AG04449 (cell line): ENCODE measurements at regions of chr19 and their contacts with region 1.

Region 1: GRCh38 chr19:13784731-13785452 is 10.4 kb upstream of the ZSWIM4 start:
- DNase-seq: no peak
- H3K4me3 ChIP-seq: no peak overlapping the region
- CTCF ChIP-seq: peak; percentile 78

Region 2: DNA sequence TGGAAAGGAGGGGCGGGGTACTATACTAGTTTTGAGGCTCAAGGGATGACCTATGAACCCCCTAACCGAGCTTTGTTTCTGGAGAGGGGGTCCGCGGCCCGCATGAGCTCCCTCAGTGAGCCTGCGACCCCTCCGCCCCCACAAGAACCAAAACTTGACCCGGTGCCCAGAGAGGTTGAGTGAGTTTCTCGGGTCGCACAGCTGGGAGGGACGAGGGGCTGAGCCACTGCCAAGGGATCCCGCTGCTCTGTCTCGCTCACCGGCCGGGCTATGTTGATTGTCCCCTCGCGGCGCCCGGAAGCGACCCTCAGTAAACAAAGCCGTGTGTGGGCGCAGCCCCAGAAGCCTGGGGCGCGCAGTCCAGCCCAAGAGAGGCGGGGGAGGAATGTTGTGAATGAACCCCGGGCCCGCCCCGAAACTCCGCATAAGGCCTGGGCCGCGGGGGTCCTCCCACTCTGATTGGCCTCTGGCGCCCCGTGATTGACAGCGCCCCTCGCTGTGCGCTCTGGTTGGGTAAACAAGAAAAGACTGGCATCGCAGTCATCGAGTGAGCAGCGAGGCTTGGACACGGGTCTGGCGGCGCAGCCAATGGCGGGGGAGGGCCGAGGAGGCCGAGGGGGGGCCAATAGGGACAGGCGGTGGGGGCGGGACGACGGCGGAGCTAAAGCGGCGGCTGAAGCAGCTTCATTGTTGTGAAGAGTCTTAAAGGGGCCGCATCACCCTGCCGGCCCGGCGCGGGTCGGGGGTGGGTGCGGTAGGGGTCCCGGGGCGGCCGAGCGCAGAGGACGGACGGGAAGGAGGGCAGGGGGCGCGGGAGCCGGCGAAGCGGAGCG is 10.1 kb after region 1 on chr19 and contains the start of gene ZSWIM4:
- CTCF ChIA-PET with region 1: interaction called, 65 read pairs
- POLR2A ChIA-PET with region 1: interaction called, 10 read pairs
- DNase-seq: peak; percentile 95
- H3K4me3 ChIP-seq: peak within 1 kb of the TSS; percentile 94
- CTCF ChIP-seq: no peak

Region 3: DNA sequence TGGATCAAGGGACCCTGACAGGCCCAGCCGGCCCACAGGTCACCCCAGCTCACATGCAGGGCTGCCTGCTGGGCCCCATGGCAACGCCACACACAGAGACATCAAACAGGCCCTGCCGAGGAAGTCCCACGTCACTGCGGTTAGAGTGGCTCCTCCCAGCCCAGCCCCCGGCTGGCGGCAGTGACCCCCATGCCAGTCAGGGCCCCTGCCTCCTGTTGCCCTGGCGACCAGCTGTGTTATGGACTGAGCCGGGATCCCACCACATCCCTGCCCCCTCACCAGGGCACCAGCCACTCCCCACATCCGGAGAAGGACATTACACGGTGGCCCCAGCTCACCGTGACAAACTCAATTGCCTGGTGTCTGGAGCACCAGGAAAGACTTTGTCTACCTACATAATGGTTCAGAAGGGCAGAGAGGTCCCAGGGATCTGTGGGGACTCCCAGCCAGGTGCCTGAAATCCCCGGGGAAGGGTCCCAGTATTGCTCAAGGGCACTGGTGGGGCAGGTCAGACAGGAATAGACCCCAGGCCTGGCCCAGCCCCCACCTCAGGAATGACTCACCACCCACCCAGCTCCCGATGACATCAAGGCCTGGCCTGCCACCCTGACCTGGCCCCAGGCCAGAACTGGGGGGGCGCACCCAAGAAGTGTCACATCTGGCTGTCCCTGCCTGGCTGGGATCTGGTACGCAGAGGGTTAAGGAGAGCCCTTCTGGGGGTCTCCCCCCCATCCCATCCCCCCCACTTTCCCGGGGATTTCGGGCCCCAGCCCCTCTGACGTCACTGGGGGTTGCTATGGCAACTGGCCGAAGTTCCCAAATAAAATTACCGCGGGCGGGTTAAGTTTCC is 61.9 kb after region 1 on chr19:
- CTCF ChIA-PET with region 1: interaction called, 11 read pairs
- POLR2A ChIA-PET with region 1: interaction called, 3 read pairs
- DNase-seq: no peak
- H3K4me3 ChIP-seq: peak overlapping the region; percentile 60
- CTCF ChIP-seq: no peak

Region 4: DNA sequence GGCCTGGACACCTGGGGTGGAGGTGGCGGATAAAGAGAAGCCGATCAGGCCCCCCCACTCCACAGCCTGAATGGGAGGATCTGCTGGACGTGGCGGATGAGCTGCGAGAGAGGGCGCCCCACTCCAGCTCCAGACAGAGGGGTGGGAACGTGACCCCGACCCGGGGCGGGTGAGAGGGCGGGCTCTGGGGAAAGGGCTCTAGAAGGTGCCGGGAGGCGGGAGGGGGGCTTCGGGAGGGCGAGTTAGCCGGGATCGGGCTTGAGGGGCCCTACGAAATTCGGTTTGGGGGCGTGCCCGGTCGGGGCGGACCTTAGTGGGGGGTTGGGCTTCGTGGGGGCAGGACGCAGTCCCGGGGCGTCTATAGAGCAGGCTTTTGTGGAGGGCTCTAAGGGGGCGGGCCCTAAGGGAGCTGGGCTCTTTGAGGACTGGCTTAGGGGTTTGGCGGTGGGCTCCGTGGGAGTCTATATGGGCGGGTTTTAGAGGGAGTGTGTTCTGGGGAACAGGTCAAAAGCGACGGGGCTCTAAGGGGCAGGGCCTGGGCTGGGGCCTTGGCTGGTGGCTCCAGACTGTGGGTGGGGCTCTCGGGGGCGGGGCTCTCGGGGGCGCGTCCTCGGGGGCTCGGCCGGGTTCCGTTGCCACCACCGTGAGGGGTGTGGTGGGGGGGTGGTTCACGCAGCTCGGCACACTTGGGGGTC is 88.0 kb after region 1 on chr19:
- CTCF ChIA-PET with region 1: interaction called, 13 read pairs
- POLR2A ChIA-PET with region 1: no interaction called
- DNase-seq: no peak
- H3K4me3 ChIP-seq: peak overlapping the region; percentile 18; the same call in 1 of the 2 replicates
- CTCF ChIP-seq: no peak